ENCODE measurements at regions of chr6 and their contacts with region 1.

Region 1: GRCh38 chr6:159125014-159125609 is 44.1 kb upstream of the FNDC1 start:
- DNase-seq: no peak
- ATAC-seq: no peak
- H3K4me3 Mint-ChIP-seq: no peak overlapping the region
- H3K27ac Mint-ChIP-seq: no peak overlapping the region
- H3K4me1 Mint-ChIP-seq: peaks cover 69% of the 10 kb centered on the region
- H3K27me3 Mint-ChIP-seq: no peaks in the 10 kb centered on the region
- CTCF ChIP-seq: no peak

Region 2: DNA sequence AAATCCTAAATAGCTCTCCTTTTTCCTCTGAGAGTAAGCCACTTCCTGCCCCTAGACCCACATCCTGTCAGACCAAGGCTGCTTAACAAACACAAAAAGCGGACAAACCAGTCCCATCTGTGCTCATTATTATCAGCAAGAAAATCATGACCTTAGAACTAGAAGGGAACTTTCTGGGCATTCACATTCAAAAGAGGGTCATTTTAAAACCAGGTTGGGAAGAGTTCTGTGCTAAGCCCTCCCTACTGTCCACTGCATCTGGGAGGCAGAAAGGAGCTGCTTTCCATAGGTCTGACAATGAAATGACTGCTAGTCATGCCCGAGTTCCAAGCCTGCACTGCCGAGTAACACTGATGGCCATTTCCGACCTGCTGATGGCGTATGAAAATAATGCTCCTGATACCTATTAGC is 321.4 kb before region 1 on chr6:
- CTCF ChIA-PET with region 1: no interaction called
- POLR2A ChIA-PET with region 1: interaction called, 4 read pairs
- intact Hi-C with region 1: loop called (anchors 5 kb)
- DNase-seq: no peak
- ATAC-seq: peak; percentile 65
- H3K4me3 Mint-ChIP-seq: peak overlapping the region; percentile 78
- H3K27ac Mint-ChIP-seq: peak overlapping the region; percentile 82
- H3K4me1 Mint-ChIP-seq: peaks cover 95% of the 10 kb centered on the region
- H3K27me3 Mint-ChIP-seq: no peaks in the 10 kb centered on the region
- CTCF ChIP-seq: no peak

Region 3: DNA sequence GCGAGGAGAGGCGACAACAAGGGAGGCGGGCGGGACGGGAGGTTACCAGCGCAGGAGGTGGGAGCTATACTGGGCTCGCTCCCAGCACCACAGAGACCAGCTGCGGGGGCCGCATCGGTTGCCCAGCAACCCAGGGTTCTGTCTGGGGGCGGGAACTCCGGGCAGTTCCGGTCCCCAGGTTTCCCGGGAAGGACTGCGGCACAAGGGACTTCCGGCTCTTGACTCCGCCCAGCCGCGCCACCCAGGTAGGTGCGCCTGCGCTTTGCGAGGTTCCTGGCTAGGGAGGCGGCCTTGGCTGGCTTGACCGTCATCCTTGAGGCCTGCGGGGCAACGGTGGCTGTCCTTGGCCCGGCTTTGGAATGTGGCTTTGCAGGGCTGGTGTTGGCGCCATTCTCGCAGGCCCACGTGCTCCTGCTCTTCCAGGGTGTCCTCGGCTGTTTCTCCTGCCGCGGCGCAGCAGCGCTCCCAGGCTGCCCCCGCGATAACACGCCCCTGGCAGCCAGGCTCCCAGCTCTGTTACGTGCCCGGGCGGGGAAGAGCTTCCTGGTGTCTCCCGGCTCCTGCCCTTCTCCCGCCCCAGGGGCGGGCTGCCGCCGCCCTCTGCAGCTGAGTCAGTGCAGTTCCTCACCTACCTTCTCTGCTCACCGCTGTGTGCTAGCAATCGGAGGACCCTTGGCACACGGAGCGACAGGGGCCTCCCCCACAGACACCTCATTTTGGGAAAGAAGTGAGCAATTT is 125.3 kb before region 1 on chr6 and contains the start of gene RSPH3:
- CTCF ChIA-PET with region 1: interaction called, 409 read pairs
- POLR2A ChIA-PET with region 1: interaction called, 12 read pairs
- intact Hi-C with region 1: no loop called
- DNase-seq: peak; percentile 87
- ATAC-seq: peak; percentile 90
- H3K4me3 Mint-ChIP-seq: peak within 1 kb of the TSS; percentile 94
- H3K27ac Mint-ChIP-seq: peak within 1 kb of the TSS; percentile 85
- H3K4me1 Mint-ChIP-seq: peaks cover 27% of the 10 kb centered on the region
- H3K27me3 Mint-ChIP-seq: no peaks in the 10 kb centered on the region
- CTCF ChIP-seq: no peak
- total RNA-seq, gene RSPH3: 1.9 and 2.4 TPM in 2 replicates

Region 4: GRCh38 chr6:159110013-159110412 is 15.1 kb before region 1 on chr6:
- CTCF ChIA-PET with region 1: interaction called, 20 read pairs
- POLR2A ChIA-PET with region 1: interaction called, 145 read pairs
- intact Hi-C with region 1: loop called (anchors 1 kb)
- DNase-seq: no peak
- ATAC-seq: no peak
- H3K4me3 Mint-ChIP-seq: no peak overlapping the region
- H3K27ac Mint-ChIP-seq: peak overlapping the region; percentile 73
- H3K4me1 Mint-ChIP-seq: peaks cover 87% of the 10 kb centered on the region
- H3K27me3 Mint-ChIP-seq: no peaks in the 10 kb centered on the region
- CTCF ChIP-seq: peak; percentile 29